ENCODE measurements at regions of chr11 and their contacts with region 1.

Region 1: DNA sequence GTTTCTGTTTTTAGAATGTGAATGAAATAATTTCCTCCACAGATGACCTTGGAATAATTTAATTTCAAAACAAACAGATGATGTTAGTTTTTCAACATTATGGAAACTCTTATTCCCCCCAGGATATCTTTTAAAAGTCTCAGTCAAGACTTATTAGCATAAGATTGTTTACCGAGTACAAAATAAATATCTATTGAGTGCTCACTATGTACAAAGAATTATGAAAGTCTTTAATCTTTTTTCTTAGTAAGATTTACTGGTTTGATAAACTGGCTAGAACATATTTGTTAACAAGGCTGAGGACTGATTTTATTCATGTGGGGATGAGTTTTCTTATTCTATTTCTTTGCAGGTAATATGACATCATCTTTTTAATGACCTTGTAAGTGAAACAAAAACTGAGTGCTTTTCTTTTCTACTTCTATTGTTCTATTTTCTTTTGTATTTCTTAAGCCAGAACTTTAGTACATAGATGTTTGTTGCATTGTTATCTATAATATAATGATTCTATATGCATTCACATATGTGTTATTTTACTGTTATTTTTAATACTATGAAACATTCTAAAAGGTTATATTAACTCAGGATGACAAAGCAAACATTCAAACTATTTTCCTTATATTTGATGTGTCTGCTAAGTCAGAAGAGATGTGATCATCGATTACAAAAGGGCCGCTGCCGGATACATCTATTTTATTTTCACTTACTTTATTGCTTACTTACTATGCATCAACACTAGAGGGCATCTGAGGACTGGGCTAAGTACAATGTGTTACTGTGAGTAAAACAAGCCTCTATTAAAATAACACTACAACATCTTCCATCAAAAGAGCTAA is 111.0 kb upstream of the ARHGAP42 start:
- DNase-seq: peak; percentile 78
- ATAC-seq: peak; percentile 61
- H3K4me3 ChIP-seq: peak overlapping the region; percentile 25; the same call in 1 of the 2 replicates
- H3K27ac ChIP-seq: no peak overlapping the region
- H3K4me1 ChIP-seq: peaks cover 31% of the 10 kb centered on the region
- H3K27me3 ChIP-seq: no peaks in the 10 kb centered on the region
- CTCF ChIP-seq: peak; percentile 97

Region 2: DNA sequence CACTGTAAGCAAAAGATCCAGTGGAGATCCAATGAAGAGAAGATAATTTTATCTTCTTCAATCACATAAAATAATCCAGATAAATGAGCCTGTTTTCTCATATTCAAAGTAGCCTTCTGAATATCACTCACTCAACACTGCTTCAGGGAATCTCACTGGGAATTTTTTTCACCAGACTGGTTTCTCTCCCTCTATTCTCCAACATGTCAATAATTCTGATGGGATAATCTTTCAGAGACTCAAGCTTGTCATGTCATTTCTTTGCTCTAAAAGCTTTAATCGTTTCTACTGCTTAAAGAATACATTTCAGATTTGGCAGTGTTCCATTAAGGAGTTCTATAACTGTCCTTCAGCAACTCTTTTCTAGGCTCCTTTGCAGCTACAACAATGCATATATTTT is 1539.0 kb before region 1 on chr11:
- CTCF ChIA-PET with region 1: no interaction called
- POLR2A ChIA-PET with region 1: no interaction called
- intact Hi-C with region 1: loop called (anchors 5 kb)
- DNase-seq: no peak
- ATAC-seq: no peak
- H3K4me3 ChIP-seq: no peak overlapping the region
- H3K27ac ChIP-seq: no peak overlapping the region
- H3K4me1 ChIP-seq: no peaks in the 10 kb centered on the region
- H3K27me3 ChIP-seq: no peaks in the 10 kb centered on the region
- CTCF ChIP-seq: no peak

Region 3: DNA sequence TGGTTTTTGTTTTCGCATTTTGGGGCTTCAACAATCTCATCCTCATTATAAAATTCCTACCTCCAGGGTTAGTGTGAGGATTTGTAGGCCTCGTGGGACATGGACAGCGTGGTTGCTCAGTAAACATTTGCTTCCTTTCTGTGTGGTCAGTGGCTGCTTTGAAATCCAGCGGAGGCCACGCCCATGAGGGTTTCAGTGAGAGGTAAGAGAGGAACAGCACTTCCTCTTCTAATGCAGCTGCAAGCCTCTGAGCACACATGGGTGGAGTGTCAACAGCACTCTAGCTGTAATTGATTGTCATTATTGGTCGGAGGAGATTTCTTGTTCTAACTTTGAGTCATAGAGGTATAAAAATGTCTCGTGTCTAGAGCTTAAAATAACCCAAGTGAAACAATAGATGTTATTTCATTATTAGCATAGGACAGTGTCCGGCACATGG is 105.0 kb after region 1 on chr11:
- CTCF ChIA-PET with region 1: interaction called, 3 read pairs
- POLR2A ChIA-PET with region 1: no interaction called
- intact Hi-C with region 1: loop called (anchors 1 kb)
- DNase-seq: peak; percentile 91
- ATAC-seq: peak; percentile 78
- H3K4me3 ChIP-seq: no peak overlapping the region
- H3K27ac ChIP-seq: peak overlapping the region; percentile 89
- H3K4me1 ChIP-seq: peaks cover 51% of the 10 kb centered on the region
- H3K27me3 ChIP-seq: no peaks in the 10 kb centered on the region
- CTCF ChIP-seq: no peak

Region 4: GRCh38 chr11:100930185-100930778 is 354.2 kb after region 1 on chr11:
- CTCF ChIA-PET with region 1: no interaction called
- POLR2A ChIA-PET with region 1: no interaction called
- intact Hi-C with region 1: loop called (anchors 1 kb)
- DNase-seq: peak; percentile 89
- ATAC-seq: peak; percentile 35
- H3K4me3 ChIP-seq: peak overlapping the region; percentile 0; the same call in 1 of the 2 replicates
- H3K27ac ChIP-seq: peak overlapping the region; percentile 55; the same call in 1 of the 2 replicates
- H3K4me1 ChIP-seq: peaks cover 31% of the 10 kb centered on the region
- H3K27me3 ChIP-seq: no peaks in the 10 kb centered on the region
- CTCF ChIP-seq: peak; percentile 92

Region 5: GRCh38 chr11:100956351-100956750 is 380.3 kb after region 1 on chr11:
- CTCF ChIA-PET with region 1: no interaction called
- POLR2A ChIA-PET with region 1: no interaction called
- intact Hi-C with region 1: no loop called
- DNase-seq: no peak
- ATAC-seq: no peak
- H3K4me3 ChIP-seq: no peak overlapping the region
- H3K27ac ChIP-seq: no peak overlapping the region
- H3K4me1 ChIP-seq: no peaks in the 10 kb centered on the region
- H3K27me3 ChIP-seq: no peaks in the 10 kb centered on the region
- CTCF ChIP-seq: no peak

Region 6: GRCh38 chr11:101436511-101437142 is 860.5 kb after region 1 on chr11:
- CTCF ChIA-PET with region 1: no interaction called
- POLR2A ChIA-PET with region 1: no interaction called
- intact Hi-C with region 1: loop called (anchors 2 kb)
- DNase-seq: peak; percentile 77
- ATAC-seq: peak; percentile 67
- H3K4me3 ChIP-seq: no peak overlapping the region
- H3K27ac ChIP-seq: no peak overlapping the region
- H3K4me1 ChIP-seq: peaks cover 3% of the 10 kb centered on the region; the same call in 1 of the 2 replicates
- H3K27me3 ChIP-seq: no peaks in the 10 kb centered on the region
- CTCF ChIP-seq: peak; percentile 95